HEK293 (cell line): ENCODE measurements at regions of chr1 and their contacts with region 1.

Region 1: GRCh38 chr1:203172128-203173010 is 3.3 kb downstream of the MYBPH start:
- H3K4me3 ChIP-seq: no peak overlapping the region
- H3K27ac ChIP-seq: no peak overlapping the region; the same call in 1 of the 2 replicates
- H3K4me1 ChIP-seq: no peaks in the 10 kb centered on the region; the same call in 1 of the 2 replicates
- CTCF ChIP-seq: peak; percentile 85

Region 2: GRCh38 chr1:203117611-203118575 is 54.5 kb before region 1 on chr1:
- CTCF ChIA-PET with region 1: interaction called, 113 read pairs
- POLR2A ChIA-PET with region 1: no interaction called
- H3K4me3 ChIP-seq: no peak overlapping the region
- H3K27ac ChIP-seq: no peak overlapping the region
- H3K4me1 ChIP-seq: no peaks in the 10 kb centered on the region
- CTCF ChIP-seq: peak; percentile 92

Region 3: GRCh38 chr1:203153989-203154821 is 18.2 kb before region 1 on chr1:
- CTCF ChIA-PET with region 1: interaction called, 19 read pairs
- POLR2A ChIA-PET with region 1: interaction called, 4 read pairs
- H3K4me3 ChIP-seq: no peak overlapping the region
- H3K27ac ChIP-seq: no peak overlapping the region; the same call in 1 of the 2 replicates
- H3K4me1 ChIP-seq: peaks cover 9% of the 10 kb centered on the region; the same call in 1 of the 2 replicates
- CTCF ChIP-seq: no peak

Region 4: DNA sequence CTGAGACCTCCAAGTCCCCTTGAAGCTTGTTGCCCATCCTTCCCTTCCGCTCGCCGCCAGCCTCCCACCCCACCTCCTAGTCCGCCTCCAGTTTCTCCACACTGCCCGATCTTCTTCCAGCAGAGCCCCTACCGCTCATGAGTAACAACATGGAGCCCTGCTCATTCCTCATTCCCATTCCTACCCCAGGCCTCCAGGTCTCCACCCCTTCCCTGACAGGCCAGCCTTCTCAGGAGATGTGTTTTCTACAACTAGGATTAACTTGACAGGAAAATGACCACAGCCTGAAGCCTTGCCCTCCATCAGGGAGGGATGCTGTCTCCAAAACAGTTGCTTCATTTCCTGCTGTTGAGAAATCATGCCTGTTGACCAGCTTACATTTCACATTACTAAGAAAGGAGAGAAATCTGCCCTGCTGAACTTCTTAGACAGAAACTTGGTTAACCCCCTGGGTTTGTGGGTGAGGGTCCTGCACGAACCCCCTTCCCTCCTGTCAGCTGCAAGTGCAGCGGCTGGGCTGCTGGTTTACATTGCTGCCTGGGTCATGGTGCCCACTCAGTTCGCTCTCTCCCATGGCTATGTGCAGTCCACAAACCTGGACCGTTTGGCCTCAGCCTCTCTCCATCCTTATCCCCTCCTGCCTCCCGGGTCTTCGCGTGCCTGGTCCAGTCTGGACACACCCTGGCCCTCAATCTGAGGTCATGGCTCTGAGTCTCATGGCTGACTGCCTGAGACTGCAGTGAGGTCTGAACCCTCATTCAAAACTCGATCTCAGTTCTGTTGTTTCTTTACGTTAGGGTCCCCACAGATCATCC is 30.3 kb after region 1 on chr1:
- CTCF ChIA-PET with region 1: interaction called, 11 read pairs
- POLR2A ChIA-PET with region 1: no interaction called
- H3K4me3 ChIP-seq: no peak overlapping the region
- H3K27ac ChIP-seq: no peak overlapping the region
- H3K4me1 ChIP-seq: no peaks in the 10 kb centered on the region
- CTCF ChIP-seq: no peak